ENCODE measurements at regions of chr18 and their contacts with region 1.

Region 1: DNA sequence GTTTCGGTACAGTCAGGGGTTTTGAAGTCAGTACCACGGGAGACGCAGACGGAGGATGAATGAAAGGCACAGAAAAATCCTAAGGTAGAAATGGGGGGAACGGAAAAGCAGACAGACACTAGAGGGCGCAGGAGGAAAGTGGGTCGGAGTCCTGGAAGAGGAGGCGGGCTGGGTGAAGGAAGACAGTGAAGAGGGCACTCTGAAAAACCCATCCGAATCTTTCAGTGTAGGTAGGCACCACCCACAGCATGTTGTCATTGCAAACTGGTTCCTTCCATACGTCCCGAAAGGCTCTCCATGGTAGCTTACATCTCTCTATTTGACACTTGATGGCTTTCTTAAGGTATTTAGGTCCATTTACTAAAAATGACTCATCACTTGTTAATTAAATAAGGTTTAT is 18.5 kb upstream of the ZNF236 start:
- DNase-seq: peak; percentile 83
- ATAC-seq: peak; percentile 79
- H3K4me3 Mint-ChIP-seq: no peak overlapping the region
- H3K27ac Mint-ChIP-seq: no peak overlapping the region
- H3K4me1 Mint-ChIP-seq: peaks cover 13% of the 10 kb centered on the region
- H3K27me3 Mint-ChIP-seq: peaks cover 4% of the 10 kb centered on the region

Region 2: GRCh38 chr18:76788571-76789317 is 15.1 kb before region 1 on chr18:
- CTCF ChIA-PET with region 1: interaction called, 36 read pairs
- POLR2A ChIA-PET with region 1: no interaction called
- intact Hi-C with region 1: no loop called
- DNase-seq: no peak
- ATAC-seq: no peak
- H3K4me3 Mint-ChIP-seq: no peak overlapping the region
- H3K27ac Mint-ChIP-seq: no peak overlapping the region
- H3K4me1 Mint-ChIP-seq: peaks cover 8% of the 10 kb centered on the region
- H3K27me3 Mint-ChIP-seq: peaks cover 10% of the 10 kb centered on the region

Region 3: DNA sequence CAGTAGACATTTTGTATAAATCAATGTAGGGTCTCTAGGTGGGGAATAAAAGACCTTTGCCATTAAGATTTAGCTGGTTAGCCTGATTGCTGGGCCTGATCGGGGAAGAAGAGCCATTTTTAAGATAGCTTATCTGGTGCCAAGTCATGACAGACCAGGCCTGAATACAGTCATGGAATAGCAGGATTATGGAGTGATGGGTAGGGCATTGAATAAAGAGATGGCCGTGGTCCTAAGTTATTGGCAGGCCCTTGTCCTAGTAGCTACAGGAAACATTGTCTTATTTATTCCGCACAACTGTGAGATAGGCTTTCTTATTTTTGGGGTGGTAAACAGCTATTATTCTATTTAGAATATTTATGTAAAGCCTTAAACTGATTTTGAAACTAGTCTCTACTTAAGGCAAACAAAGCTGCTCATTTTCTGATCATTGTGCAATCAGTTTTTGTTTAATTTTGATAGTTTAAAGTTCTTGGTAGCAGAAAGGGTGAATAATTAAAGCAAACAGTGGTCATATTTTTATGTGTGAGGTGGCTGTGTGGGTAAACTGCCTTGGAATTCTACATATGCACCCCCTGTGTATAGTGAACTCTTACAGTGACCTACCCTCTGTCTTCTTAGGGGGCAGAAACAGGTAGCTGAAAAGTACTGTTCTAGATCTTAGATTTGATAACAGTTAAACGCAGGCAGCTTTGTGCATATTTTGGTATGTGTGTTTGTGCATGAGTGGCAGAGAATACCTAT is 41.1 kb after region 1 on chr18:
- CTCF ChIA-PET with region 1: interaction called, 11 read pairs
- POLR2A ChIA-PET with region 1: no interaction called
- intact Hi-C with region 1: no loop called
- DNase-seq: no peak
- ATAC-seq: no peak
- H3K4me3 Mint-ChIP-seq: no peak overlapping the region
- H3K27ac Mint-ChIP-seq: no peak overlapping the region
- H3K4me1 Mint-ChIP-seq: peaks cover 21% of the 10 kb centered on the region
- H3K27me3 Mint-ChIP-seq: no peaks in the 10 kb centered on the region

Region 4: GRCh38 chr18:76875390-76876325 is 71.8 kb after region 1 on chr18:
- CTCF ChIA-PET with region 1: interaction called, 10 read pairs
- POLR2A ChIA-PET with region 1: no interaction called
- intact Hi-C with region 1: loop called (anchors 1 to 5 kb)
- DNase-seq: peak; percentile 67
- ATAC-seq: peak; percentile 74
- H3K4me3 Mint-ChIP-seq: no peak overlapping the region
- H3K27ac Mint-ChIP-seq: peak overlapping the region; percentile 74
- H3K4me1 Mint-ChIP-seq: peaks cover 14% of the 10 kb centered on the region
- H3K27me3 Mint-ChIP-seq: no peaks in the 10 kb centered on the region

Region 5: GRCh38 chr18:76982841-76983587 is 179.2 kb after region 1 on chr18:
- CTCF ChIA-PET with region 1: interaction called, 62 read pairs
- POLR2A ChIA-PET with region 1: no interaction called
- intact Hi-C with region 1: loop called (anchors 1 kb)
- DNase-seq: peak; percentile 92
- ATAC-seq: peak; percentile 99
- H3K4me3 Mint-ChIP-seq: no peak overlapping the region
- H3K27ac Mint-ChIP-seq: no peak overlapping the region
- H3K4me1 Mint-ChIP-seq: no peaks in the 10 kb centered on the region
- H3K27me3 Mint-ChIP-seq: no peaks in the 10 kb centered on the region

Region 6: GRCh38 chr18:77006305-77007175 is 202.7 kb after region 1 on chr18:
- CTCF ChIA-PET with region 1: no interaction called
- POLR2A ChIA-PET with region 1: no interaction called
- intact Hi-C with region 1: no loop called
- DNase-seq: no peak
- ATAC-seq: no peak
- H3K4me3 Mint-ChIP-seq: no peak overlapping the region
- H3K27ac Mint-ChIP-seq: no peak overlapping the region
- H3K4me1 Mint-ChIP-seq: peaks cover 18% of the 10 kb centered on the region
- H3K27me3 Mint-ChIP-seq: no peaks in the 10 kb centered on the region

Region 7: GRCh38 chr18:77650799-77651385 is 847.1 kb after region 1 on chr18:
- CTCF ChIA-PET with region 1: no interaction called
- POLR2A ChIA-PET with region 1: no interaction called
- intact Hi-C with region 1: loop called in 1 of 2 experiments (anchors 1 kb)
- DNase-seq: peak; percentile 82
- ATAC-seq: peak; percentile 83
- H3K4me3 Mint-ChIP-seq: no peak overlapping the region
- H3K27ac Mint-ChIP-seq: no peak overlapping the region
- H3K4me1 Mint-ChIP-seq: no peaks in the 10 kb centered on the region
- H3K27me3 Mint-ChIP-seq: peaks cover 14% of the 10 kb centered on the region